ENCODE measurements at regions of chr14 and their contacts with region 1.

Region 1: DNA sequence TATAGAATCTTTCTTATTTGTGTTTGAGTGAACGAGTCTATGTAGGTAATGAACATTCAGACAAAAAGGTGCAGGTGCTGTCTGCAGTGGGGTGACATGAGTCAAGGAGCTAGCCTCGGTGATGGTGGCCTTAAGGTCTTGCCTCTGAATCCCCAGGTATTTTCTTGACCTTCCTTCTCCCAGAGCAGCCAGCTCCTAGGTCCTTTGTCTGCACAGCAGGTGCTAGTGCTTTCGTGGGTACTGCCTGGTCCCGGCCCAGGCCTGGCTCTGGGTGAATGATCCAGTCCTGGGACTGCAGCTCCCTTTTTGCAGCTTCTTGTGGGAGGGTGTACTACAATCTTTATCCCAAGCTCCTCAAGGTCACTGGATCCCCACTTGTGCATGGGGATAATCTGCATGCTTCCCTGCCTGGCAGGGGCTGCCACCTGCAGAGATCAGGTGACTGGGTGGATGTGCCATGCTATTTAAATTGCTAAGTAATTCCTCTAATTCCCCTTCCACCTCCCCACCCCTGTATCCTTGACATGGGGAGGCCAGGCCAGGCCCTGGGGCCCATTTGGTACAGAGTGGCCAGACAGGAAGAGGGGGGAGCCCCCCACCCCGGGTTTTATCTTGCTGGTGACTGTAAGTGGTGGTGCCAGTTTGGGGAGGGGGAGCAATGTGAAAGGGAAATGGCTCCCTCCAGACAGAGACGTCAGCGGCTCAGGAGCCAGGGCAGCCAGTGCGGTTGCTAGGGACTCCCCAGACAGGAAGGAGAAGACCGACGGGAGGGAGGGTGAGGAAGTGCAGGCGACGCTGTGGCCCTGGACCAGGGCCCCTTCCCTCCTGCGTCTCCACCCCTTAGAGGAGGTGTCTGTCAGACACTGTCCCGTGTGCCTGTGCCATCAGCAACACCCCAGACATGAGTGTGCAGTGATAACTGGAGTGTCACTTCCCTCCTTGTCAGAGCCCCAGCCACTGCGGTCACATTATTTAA is 6.7 kb downstream of the VASH1 start:
- DNase-seq: peak in 8 of 9 donors; percentile 28 to 74 (median 58)
- ATAC-seq: peak; percentile 98
- H3K4me3 ChIP-seq: no peak overlapping the region
- H3K4me3 Mint-ChIP-seq: peak overlapping the region in 7 of 10 donors; percentile 48 to 69 (median 57)
- H3K27ac ChIP-seq: peak overlapping the region; percentile 23
- H3K27ac Mint-ChIP-seq: peak overlapping the region in 8 of 9 donors; percentile 50 to 81 (median 70)
- H3K4me1 ChIP-seq: peaks cover 8 to 16% of the 10 kb centered on the region in 2 donors
- H3K4me1 Mint-ChIP-seq: peaks cover 0 to 38% (median 6%) of the 10 kb centered on the region in 7 donors
- H3K27me3 ChIP-seq: no peaks in the 10 kb centered on the region
- H3K27me3 Mint-ChIP-seq: peaks cover 0 to 28% (median 0%) of the 10 kb centered on the region in 5 donors

Region 2: GRCh38 chr14:76307786-76308780 is 459.9 kb before region 1 on chr14:
- CTCF ChIA-PET with region 1: no interaction called
- POLR2A ChIA-PET with region 1: no interaction called
- intact Hi-C with region 1: no loop called
- DNase-seq: no peak
- ATAC-seq: no peak
- H3K4me3 ChIP-seq: no peak overlapping the region
- H3K4me3 Mint-ChIP-seq: peak overlapping the region in 1 of 10 donors; percentile 61
- H3K27ac ChIP-seq: no peak overlapping the region
- H3K27ac Mint-ChIP-seq: no peak overlapping the region
- H3K4me1 ChIP-seq: no peaks in the 10 kb centered on the region
- H3K4me1 Mint-ChIP-seq: peaks cover 3 to 9% (median 5%) of the 10 kb centered on the region in 7 donors
- H3K27me3 ChIP-seq: no peaks in the 10 kb centered on the region
- H3K27me3 Mint-ChIP-seq: peaks cover 31 to 74% (median 44%) of the 10 kb centered on the region in 5 donors

Region 3: GRCh38 chr14:76784266-76785264 is 16.6 kb after region 1 on chr14:
- CTCF ChIA-PET with region 1: no interaction called
- POLR2A ChIA-PET with region 1: no interaction called
- intact Hi-C with region 1: loop called in 1 of 2 experiments (anchors 1 kb)
- DNase-seq: peak; percentile 19 to 64 (median 40)
- ATAC-seq: peak; percentile 98
- H3K4me3 ChIP-seq: no peak overlapping the region
- H3K4me3 Mint-ChIP-seq: no peak overlapping the region
- H3K27ac ChIP-seq: no peak overlapping the region
- H3K27ac Mint-ChIP-seq: peak overlapping the region in 8 of 9 donors; percentile 5 to 83 (median 40)
- H3K4me1 ChIP-seq: peaks cover 0 to 6% of the 10 kb centered on the region in 2 donors
- H3K4me1 Mint-ChIP-seq: peaks cover 8 to 43% (median 15%) of the 10 kb centered on the region in 7 donors
- H3K27me3 ChIP-seq: no peaks in the 10 kb centered on the region
- H3K27me3 Mint-ChIP-seq: no peaks in the 10 kb centered on the region

Measured in naive thymus-derived CD4-positive, alpha-beta T cell (primary cell).